AG04449 (cell line): ENCODE measurements at regions of chr4 and their contacts with region 1.

Region 1: GRCh38 chr4:138510053-138510452 is 267.9 kb upstream of the SLC7A11 start:
- DNase-seq: peak; percentile 16
- H3K4me3 ChIP-seq: no peak overlapping the region
- CTCF ChIP-seq: no peak

Region 2: GRCh38 chr4:138522366-138522765 is 12.3 kb after region 1 on chr4:
- CTCF ChIA-PET with region 1: interaction called, 13 read pairs
- POLR2A ChIA-PET with region 1: no interaction called
- DNase-seq: no peak
- H3K4me3 ChIP-seq: no peak overlapping the region
- CTCF ChIP-seq: peak; percentile 18